Activated CD8-positive, alpha-beta T cell treated with anti-CD3 and anti-CD28 coated beads, Interleukin-2, amount 10 ng/mL, durations not matched to agents 7 days and 5 days (primary cell): ENCODE measurements at regions of chr13 and their contacts with region 1.

Region 1: DNA sequence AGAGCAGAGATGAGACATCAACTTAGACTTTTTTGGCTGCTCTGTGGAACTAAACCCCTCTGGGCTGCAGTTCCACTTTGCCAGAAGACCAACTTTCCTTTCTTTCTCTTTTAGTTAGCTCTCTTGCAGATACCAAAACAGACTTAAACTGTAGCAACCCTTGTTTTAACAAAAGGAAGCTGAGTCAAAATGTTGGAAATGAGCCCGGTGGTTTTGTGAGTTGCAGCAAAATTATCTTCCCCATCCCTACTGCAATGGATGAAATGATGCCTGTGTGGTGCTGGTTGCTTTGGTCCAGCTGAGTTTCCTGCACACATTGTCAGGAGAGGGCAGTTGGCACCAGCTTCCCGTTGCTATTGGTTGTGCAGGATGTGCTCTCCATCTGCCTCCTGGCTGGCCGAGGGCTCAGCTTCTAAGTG is 115.3 kb downstream of the LRCH1 start:
- DNase-seq: no peak
- ATAC-seq: peak; percentile 37
- H3K4me3 Mint-ChIP-seq: peak overlapping the region; percentile 80
- H3K27ac Mint-ChIP-seq: peak overlapping the region; percentile 92
- H3K4me1 Mint-ChIP-seq: peaks cover 43% of the 10 kb centered on the region
- H3K27me3 Mint-ChIP-seq: no peaks in the 10 kb centered on the region

Region 2: DNA sequence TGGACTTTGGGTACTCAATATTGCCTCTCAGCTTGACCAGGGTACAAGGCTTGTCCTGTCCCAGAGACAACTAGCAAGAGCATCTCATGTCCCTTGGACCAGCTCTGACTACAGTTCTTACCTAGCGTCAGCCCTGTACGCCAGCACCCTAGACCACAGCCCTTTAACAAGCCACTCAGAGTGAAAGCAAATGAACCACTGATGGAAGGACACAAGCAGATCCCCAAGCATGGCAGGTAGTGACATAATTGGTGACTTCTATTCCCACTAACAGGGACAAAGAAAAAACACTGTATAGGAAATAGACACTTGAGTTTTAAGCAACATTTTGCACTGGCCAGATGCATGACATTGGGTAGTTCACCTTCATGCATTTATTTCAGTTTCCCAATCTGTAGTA is 124.1 kb before region 1 on chr13:
- CTCF ChIA-PET with region 1: no interaction called
- POLR2A ChIA-PET with region 1: no interaction called
- DNase-seq: no peak
- ATAC-seq: no peak
- H3K4me3 Mint-ChIP-seq: no peak overlapping the region
- H3K27ac Mint-ChIP-seq: no peak overlapping the region
- H3K4me1 Mint-ChIP-seq: peaks cover 4% of the 10 kb centered on the region
- H3K27me3 Mint-ChIP-seq: peaks cover 4% of the 10 kb centered on the region

Region 3: DNA sequence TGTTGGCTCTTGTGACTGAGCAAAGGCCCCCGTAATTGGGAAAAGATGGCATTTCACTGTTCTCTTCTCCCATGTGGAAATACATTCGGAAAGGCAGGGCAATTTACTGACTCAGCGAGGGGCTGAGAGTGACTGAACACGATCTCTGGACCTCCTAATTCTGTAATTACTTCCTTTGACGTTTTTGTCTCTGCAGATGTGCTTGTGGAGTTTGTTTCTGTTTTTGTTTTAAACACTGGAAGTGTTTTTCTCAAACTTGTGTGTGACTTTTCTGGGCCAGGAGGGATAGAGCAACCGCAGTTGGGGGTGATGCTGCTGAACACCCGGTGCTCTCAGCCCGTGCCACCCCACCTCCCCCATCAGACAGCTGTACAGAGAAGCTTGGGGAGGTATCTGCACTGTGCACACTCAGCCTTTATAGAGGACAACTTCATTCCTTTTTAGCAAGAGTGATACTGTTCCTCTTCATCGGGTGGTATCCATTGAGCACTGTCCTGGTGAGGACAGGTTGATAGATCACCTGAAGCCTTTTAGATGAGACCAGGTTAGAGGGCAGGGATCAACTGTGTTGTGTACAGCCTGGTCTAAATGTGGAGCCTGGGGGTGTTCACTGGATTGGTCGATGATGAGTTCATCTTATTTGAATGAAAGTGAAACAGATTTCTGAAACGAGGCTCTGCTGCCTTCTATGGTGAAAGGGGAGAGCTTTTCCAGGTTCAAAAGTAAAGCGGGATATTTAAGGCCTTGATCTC is 11.2 kb after region 1 on chr13:
- CTCF ChIA-PET with region 1: interaction called, 15 read pairs
- POLR2A ChIA-PET with region 1: interaction called, 5 read pairs
- DNase-seq: peak; percentile 61
- ATAC-seq: peak; percentile 93
- H3K4me3 Mint-ChIP-seq: no peak overlapping the region
- H3K27ac Mint-ChIP-seq: no peak overlapping the region
- H3K4me1 Mint-ChIP-seq: peaks cover 29% of the 10 kb centered on the region
- H3K27me3 Mint-ChIP-seq: no peaks in the 10 kb centered on the region